Heart left ventricle (tissue), 16 donors: ENCODE measurements at regions of chr22 and their contacts with region 1.

Region 1: DNA sequence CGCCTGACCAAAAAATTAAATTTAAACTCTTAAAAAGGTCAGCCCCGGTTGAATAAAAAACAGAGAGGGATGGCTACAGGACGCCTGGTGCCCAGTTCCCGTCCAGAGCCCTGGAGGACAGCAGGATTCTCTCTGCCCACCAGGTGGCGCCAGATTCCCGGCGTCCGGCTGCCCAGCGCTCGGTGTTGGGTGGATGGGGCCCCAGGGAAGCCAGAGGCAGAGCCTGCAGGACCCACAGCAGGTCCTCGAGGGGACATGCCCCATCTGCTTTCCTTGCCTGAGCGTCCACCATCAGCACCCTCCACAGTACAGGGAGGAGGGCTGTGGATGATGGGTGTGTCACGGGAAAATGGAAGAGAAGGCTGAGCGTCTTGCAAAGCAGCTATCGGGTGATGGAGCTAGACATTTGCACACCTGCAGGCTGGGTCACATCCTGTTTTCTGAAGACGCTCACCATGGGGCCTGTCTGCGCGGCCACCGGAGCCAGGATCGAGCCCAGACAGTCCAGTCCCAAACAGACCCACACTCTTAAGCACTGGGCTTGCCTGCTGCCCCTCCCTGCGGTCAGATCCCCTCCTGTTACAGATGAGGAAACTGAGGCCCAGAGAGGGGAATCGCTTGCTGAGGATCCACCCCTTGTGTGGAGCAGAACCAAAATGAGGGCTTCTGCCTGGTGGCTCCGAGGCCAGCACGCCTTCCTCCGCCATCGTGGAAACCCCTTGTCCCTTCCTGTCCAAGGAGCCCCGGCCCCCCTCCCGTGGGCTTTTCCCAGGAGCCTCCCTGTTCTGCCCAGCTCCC is 18.5 kb upstream of the CBX7 start:
- DNase-seq: peak; percentile 81 to 93 (median 84)
- ATAC-seq: peak; percentile 76 to 87 (median 83)
- H3K4me3 ChIP-seq: peak overlapping the region in 4 of 12 donors; percentile 1 to 18 (median 10)
- H3K27ac ChIP-seq: peak overlapping the region in 3 of 12 donors; percentile 25 to 42 (median 40)
- H3K4me1 ChIP-seq: peaks cover 33 to 56% (median 47%) of the 10 kb centered on the region in 12 donors
- H3K27me3 ChIP-seq: no peaks in the 10 kb centered on the region
- CTCF ChIP-seq: peak; percentile 94 to 99 (median 96)
- POLR2A ChIP-seq: no peak

Region 2: GRCh38 chr22:39123751-39124601 is 47.0 kb before region 1 on chr22:
- intact Hi-C with region 1: no loop called
- DNase-seq: no peak
- ATAC-seq: peak in 1 of 4 donors; percentile 48
- H3K4me3 ChIP-seq: no peak overlapping the region
- H3K27ac ChIP-seq: no peak overlapping the region
- H3K4me1 ChIP-seq: peaks cover 0 to 4% (median 0%) of the 10 kb centered on the region in 12 donors
- H3K27me3 ChIP-seq: no peaks in the 10 kb centered on the region
- CTCF ChIP-seq: no peak
- POLR2A ChIP-seq: no peak

Region 3: GRCh38 chr22:39306581-39307361 is 135.7 kb after region 1 on chr22:
- intact Hi-C with region 1: loop called in 8 of 10 experiments (anchors 1 to 2 kb)
- DNase-seq: peak in 2 of 5 donors; percentile 66 to 68
- ATAC-seq: peak in 2 of 4 donors; percentile 14 to 43
- H3K4me3 ChIP-seq: no peak overlapping the region
- H3K27ac ChIP-seq: peak overlapping the region in 3 of 12 donors; percentile 24 to 54 (median 48)
- H3K4me1 ChIP-seq: peaks cover 0 to 34% (median 19%) of the 10 kb centered on the region in 12 donors
- H3K27me3 ChIP-seq: no peaks in the 10 kb centered on the region
- CTCF ChIP-seq: peak; percentile 21 to 54 (median 44)
- POLR2A ChIP-seq: no peak

Region 4: GRCh38 chr22:39674536-39674935 is 503.5 kb after region 1 on chr22:
- intact Hi-C with region 1: no loop called
- DNase-seq: no peak
- ATAC-seq: no peak
- H3K4me3 ChIP-seq: no peak overlapping the region
- H3K27ac ChIP-seq: no peak overlapping the region
- H3K4me1 ChIP-seq: no peaks in the 10 kb centered on the region
- H3K27me3 ChIP-seq: peaks cover 0 to 29% (median 0%) of the 10 kb centered on the region in 9 donors
- CTCF ChIP-seq: no peak
- POLR2A ChIP-seq: no peak